ENCODE measurements at regions of chr5 and their contacts with region 1.

Region 1: GRCh38 chr5:1666812-1667588 is 132.6 kb downstream of the MRPL36 start:
- DNase-seq: peak in 2 of 5 donors; percentile 37 to 57
- ATAC-seq: peak in 3 of 4 donors; percentile 47 to 68 (median 47)
- H3K4me3 ChIP-seq: peak overlapping the region in 10 of 12 donors; percentile 11 to 41 (median 31)
- H3K27ac ChIP-seq: no peak overlapping the region
- H3K4me1 ChIP-seq: peaks cover 0 to 14% (median 1%) of the 10 kb centered on the region in 12 donors
- H3K27me3 ChIP-seq: peaks cover 18 to 59% (median 42%) of the 10 kb centered on the region in 9 donors
- CTCF ChIP-seq: peak in 6 of 12 donors; percentile 12 to 35 (median 26)
- POLR2A ChIP-seq: no peak

Region 2: DNA sequence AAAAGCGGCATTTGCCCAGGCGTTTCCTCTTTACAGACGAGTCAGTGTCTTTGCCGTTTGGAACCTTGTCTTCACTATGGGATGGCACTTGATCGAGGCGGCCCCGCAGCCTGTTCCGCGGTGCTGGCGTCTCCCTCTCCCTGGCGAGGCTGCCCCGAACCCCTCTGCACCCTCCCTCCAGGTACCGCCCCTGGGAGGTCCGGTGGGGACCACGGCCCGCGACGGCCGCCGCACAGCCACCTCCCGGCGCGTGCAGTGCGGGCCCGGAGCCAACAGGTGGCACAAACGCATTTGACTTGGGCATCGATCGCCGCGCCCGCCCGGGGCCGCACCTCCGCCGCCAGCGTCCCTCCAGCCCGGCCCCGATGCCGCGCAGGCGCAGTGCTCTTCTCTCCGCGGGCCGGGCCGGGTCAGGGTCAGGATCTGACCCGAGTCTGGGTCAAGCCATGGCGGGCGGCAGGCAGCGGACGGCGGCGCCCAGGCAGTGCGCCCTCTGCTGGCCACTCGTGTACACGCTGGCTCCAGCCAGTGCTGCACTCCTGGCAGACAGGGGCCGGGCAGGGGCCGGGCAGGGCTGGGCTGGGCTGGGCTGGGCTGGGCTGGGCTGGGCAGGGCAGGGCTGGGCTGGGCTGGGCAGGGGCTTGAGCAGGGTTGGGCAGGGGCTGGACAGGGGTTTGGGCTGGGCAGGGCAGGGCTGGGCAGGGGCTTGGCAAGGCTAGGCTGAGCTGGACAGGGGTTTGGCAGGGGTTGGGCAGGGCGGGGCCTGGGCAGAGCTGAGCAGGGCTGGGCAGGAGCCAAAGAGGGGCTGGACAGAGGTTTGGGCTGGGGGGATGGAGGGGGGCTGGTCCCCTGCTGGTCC is 371.6 kb after region 1 on chr5:
- intact Hi-C with region 1: loop called in 1 of 10 experiments (anchors 5 kb)
- DNase-seq: peak; percentile 59 to 86 (median 73)
- ATAC-seq: peak; percentile 87 to 99 (median 94)
- H3K4me3 ChIP-seq: peak overlapping the region; percentile 34 to 67 (median 56)
- H3K27ac ChIP-seq: no peak overlapping the region
- H3K4me1 ChIP-seq: peaks cover 0 to 14% (median 3%) of the 10 kb centered on the region in 12 donors
- H3K27me3 ChIP-seq: peaks cover 0 to 10% (median 0%) of the 10 kb centered on the region in 9 donors
- CTCF ChIP-seq: peak; percentile 63 to 84 (median 72)
- POLR2A ChIP-seq: no peak

Region 3: DNA sequence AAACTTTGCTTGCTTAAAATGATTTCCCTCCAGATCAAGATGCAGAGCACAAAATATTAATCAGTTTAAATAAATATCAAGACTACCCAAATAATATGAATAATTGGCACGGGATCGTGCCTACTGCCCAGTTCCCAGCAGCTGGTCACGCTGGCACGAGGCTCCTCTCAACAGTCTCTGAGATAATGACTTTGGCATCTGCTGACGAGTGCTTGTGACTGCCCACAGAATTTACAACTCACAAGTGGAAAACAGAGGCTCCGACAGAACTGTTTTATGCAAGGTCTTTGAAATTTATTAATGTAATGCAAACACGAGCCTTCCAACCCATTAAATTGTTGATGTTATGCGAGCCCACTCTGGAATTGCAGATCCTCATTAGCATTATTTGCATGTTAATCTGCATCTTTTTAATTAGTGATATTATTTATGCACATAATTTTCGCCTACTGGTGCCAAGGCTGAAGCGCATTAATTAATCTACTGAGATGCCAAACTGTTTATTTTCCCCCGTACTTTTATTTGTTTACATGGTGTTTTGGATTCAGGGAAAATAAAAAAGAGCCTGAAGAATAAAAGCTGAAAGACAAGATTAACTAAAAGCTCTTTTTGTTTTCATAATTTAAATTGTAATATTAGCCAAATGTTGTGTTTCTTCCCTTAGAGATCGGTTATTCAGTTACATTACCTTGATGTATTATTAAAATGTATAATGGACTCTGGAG is 1559.4 kb after region 1 on chr5:
- intact Hi-C with region 1: no loop called
- DNase-seq: peak in 2 of 5 donors; percentile 28 to 55
- ATAC-seq: peak in 3 of 4 donors; percentile 62 to 86 (median 80)
- H3K4me3 ChIP-seq: no peak overlapping the region
- H3K27ac ChIP-seq: no peak overlapping the region
- H3K4me1 ChIP-seq: no peaks in the 10 kb centered on the region
- H3K27me3 ChIP-seq: no peaks in the 10 kb centered on the region
- CTCF ChIP-seq: no peak
- POLR2A ChIP-seq: no peak